ENCODE measurements at regions of chr12 and their contacts with region 1.

Region 1: GRCh38 chr12:9707864-9708808 is 24.8 kb downstream of the CLECL1 start:
- DNase-seq: no peak

Region 2: GRCh38 chr12:9634177-9634803 is 73.8 kb before region 1 on chr12:
- intact Hi-C with region 1: loop called in 1 of 2 experiments (anchors 10 kb)
- DNase-seq: no peak

Region 3: DNA sequence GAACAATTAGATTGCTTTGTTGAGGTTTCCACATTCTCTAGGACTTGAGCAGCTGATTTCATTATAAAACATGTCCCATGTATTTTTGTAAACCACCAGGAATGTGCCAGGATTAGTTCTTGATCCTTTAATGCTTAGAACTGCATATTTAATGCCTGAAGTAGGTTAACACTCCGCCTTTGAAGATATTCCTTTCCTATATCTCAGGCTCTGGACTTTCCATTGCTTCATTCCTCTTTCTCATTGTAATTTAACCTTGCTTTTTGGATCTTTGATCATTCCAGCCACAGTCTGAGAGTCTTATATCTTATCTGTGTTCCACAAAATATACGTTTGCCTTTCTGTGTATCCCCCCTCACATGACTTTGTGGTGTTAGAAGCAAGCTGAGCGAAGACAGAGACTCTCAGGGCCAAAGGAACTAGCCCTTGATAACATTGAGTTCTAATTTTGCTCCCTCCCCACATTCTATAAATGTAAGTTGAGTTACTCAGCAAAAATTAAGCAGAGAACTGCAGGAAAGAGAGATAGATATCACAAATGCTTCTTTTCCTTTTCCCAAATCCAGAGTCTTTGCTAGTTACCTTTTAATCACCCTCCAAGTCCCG is 293.1 kb after region 1 on chr12:
- intact Hi-C with region 1: no loop called
- DNase-seq: no peak